ENCODE measurements at regions of chr11 and their contacts with region 1.

Region 1: DNA sequence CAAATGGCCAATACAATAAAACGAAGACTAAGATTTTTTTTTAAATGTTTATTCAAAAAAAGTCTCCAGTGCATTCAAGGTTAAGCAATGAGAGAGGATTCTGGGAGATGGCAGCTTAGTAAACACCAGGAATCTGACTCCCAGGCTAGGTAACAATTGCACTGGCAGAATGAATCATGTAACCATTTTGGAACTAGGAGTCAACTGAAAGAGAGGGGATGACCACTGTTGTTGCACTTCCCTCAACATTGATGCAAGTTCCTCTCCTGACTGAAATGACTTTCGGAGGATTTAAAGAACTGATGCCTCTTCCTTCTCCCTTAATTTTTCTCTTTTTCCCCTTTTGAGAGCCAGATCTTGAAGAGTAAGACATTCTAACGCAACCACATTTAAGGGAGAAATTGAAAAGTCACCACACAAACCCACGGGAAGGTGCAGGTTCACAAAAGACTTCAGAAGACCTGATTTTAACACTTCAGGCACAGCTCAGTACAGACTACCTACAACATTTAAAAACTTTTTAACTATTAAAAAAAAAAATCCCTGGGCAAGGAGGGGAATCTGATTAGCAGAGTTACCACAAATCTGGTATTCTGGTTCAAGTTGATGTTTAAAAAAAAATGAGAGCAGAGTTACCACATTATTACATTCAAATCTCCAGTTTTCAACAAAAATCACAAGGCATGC is 56.8 kb downstream of the FCHSD2 start:
- DNase-seq: no peak
- ATAC-seq: no peak
- H3K4me3 ChIP-seq: no peak overlapping the region
- H3K4me3 Mint-ChIP-seq: no peak overlapping the region
- H3K27ac ChIP-seq: no peak overlapping the region
- H3K27ac Mint-ChIP-seq: peak overlapping the region in 4 of 9 donors; percentile 9 to 56 (median 24)
- H3K4me1 ChIP-seq: no peaks in the 10 kb centered on the region
- H3K4me1 Mint-ChIP-seq: peaks cover 10 to 44% (median 31%) of the 10 kb centered on the region in 7 donors
- H3K27me3 ChIP-seq: no peaks in the 10 kb centered on the region
- H3K27me3 Mint-ChIP-seq: no peaks in the 10 kb centered on the region

Region 2: GRCh38 chr11:72471005-72471898 is 614.1 kb before region 1 on chr11:
- CTCF ChIA-PET with region 1: no interaction called
- POLR2A ChIA-PET with region 1: no interaction called
- intact Hi-C with region 1: no loop called
- DNase-seq: peak; percentile 23 to 72 (median 62)
- ATAC-seq: peak; percentile 84
- H3K4me3 ChIP-seq: no peak overlapping the region
- H3K4me3 Mint-ChIP-seq: peak overlapping the region in 6 of 10 donors; percentile 34 to 63 (median 42)
- H3K27ac ChIP-seq: no peak overlapping the region
- H3K27ac Mint-ChIP-seq: peak overlapping the region in 1 of 9 donors; percentile 2
- H3K4me1 ChIP-seq: no peaks in the 10 kb centered on the region
- H3K4me1 Mint-ChIP-seq: peaks cover 0 to 6% (median 4%) of the 10 kb centered on the region in 7 donors
- H3K27me3 ChIP-seq: no peaks in the 10 kb centered on the region
- H3K27me3 Mint-ChIP-seq: peaks cover 23 to 51% (median 34%) of the 10 kb centered on the region in 5 donors

Region 3: DNA sequence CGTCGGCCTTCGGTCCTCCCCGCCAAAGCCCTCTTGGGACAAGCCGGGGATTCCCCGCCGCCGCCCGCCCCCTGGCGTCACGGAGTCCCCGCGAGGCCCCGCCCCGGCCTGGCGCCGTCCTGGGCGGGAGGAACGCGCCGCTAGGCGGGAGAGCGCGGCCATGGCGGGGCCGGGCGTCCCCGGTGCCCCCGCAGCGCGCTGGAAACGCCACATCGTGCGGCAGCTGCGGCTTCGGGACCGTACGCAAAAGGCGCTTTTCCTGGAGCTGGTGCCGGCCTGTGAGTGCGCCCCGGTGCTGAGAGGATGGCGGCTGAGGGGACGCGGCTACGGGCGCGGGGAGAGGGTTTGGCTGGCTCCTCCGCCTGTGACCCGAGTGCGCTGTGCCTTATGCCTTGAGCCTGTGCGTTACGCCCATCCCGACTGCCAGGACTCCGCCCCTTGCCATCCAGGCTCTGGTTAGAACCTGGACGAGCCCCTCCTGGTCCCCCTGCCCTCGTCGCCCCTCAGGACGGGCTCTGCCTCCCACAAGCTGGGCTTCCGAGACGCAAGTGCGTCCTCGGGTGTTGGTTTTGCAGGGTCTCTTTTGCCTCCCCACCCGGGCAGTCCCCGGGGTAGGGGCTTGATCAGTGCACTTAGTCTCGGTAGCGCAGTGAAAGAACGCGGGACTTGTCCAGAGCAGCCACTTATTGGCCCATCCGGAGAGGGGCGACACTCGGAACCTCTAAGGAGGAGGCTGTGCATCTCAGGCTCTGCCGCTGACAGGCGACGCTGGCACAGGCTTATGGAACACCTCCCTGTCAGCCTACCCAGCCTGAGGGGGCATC is 270.8 kb before region 1 on chr11 and contains the start of gene ATG16L2:
- CTCF ChIA-PET with region 1: no interaction called
- POLR2A ChIA-PET with region 1: no interaction called
- intact Hi-C with region 1: no loop called
- DNase-seq: peak in 8 of 9 donors; percentile 53 to 96 (median 92)
- ATAC-seq: peak; percentile 89
- H3K4me3 ChIP-seq: peak within 1 kb of the TSS; percentile 89
- H3K4me3 Mint-ChIP-seq: peak within 1 kb of the TSS; percentile 97 to 99 (median 98)
- H3K27ac ChIP-seq: peak within 1 kb of the TSS; percentile 100
- H3K27ac Mint-ChIP-seq: peak within 1 kb of the TSS; percentile 86 to 99 (median 98)
- H3K4me1 ChIP-seq: peaks cover 18 to 23% of the 10 kb centered on the region in 2 donors
- H3K4me1 Mint-ChIP-seq: peaks cover 31 to 67% (median 52%) of the 10 kb centered on the region in 7 donors
- H3K27me3 ChIP-seq: no peaks in the 10 kb centered on the region
- H3K27me3 Mint-ChIP-seq: no peaks in the 10 kb centered on the region
- total RNA-seq, gene ATG16L2: 99.5 to 199 (median 166) TPM

Region 4: GRCh38 chr11:73729594-73730206 is 644.4 kb after region 1 on chr11:
- CTCF ChIA-PET with region 1: no interaction called
- POLR2A ChIA-PET with region 1: no interaction called
- intact Hi-C with region 1: loop called in 1 of 2 experiments (anchors 10 kb)
- DNase-seq: peak in 1 of 9 donors; percentile 9
- ATAC-seq: no peak
- H3K4me3 ChIP-seq: no peak overlapping the region
- H3K4me3 Mint-ChIP-seq: no peak overlapping the region
- H3K27ac ChIP-seq: no peak overlapping the region
- H3K27ac Mint-ChIP-seq: peak overlapping the region in 5 of 9 donors; percentile 32 to 72 (median 51)
- H3K4me1 ChIP-seq: no peaks in the 10 kb centered on the region
- H3K4me1 Mint-ChIP-seq: peaks cover 9 to 37% (median 31%) of the 10 kb centered on the region in 7 donors
- H3K27me3 ChIP-seq: no peaks in the 10 kb centered on the region
- H3K27me3 Mint-ChIP-seq: no peaks in the 10 kb centered on the region